ENCODE measurements at regions of chr4 and their contacts with region 1.

Region 1: DNA sequence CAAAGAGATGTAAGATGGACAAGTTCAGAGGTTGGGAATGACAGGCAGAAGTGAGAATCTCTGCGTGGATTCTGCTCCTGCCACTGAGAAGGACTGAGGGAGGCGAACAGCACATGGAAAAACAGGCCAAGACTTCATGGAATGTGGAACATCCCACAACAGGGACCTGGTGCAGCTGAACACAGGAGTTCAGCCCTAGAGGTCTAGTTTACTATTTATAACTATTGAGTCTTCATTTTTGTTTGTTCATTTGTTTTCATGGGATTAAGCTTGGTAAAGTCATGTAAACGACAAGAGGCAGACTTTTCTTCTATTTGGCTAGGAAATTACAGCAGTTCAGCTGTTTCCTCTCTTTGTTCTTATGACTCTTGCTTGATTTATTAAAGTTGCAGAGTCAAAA is 234.5 kb downstream of the MAML3 start:
- DNase-seq: no peak
- H3K4me3 ChIP-seq: no peak overlapping the region
- H3K27ac ChIP-seq: peak overlapping the region; percentile 23 to 83
- H3K4me1 ChIP-seq: peaks cover 34% of the 10 kb centered on the region
- H3K27me3 ChIP-seq: no peaks in the 10 kb centered on the region
- CTCF ChIP-seq: no peak
- EP300 ChIP-seq: no peak
- POLR2A ChIP-seq: no peak

Region 2: GRCh38 chr4:138816875-138817274 is 1102.6 kb before region 1 on chr4:
- intact Hi-C with region 1: no loop called
- DNase-seq: no peak
- H3K4me3 ChIP-seq: no peak overlapping the region
- H3K27ac ChIP-seq: no peak overlapping the region
- H3K4me1 ChIP-seq: no peaks in the 10 kb centered on the region
- H3K27me3 ChIP-seq: no peaks in the 10 kb centered on the region
- CTCF ChIP-seq: no peak
- EP300 ChIP-seq: no peak
- POLR2A ChIP-seq: no peak

Region 3: GRCh38 chr4:140049024-140049848 is 129.7 kb after region 1 on chr4:
- intact Hi-C with region 1: loop called in 1 of 4 experiments (anchors 10 kb)
- DNase-seq: peak; percentile 68 to 78 (median 68)
- H3K4me3 ChIP-seq: peak overlapping the region; percentile 17
- H3K27ac ChIP-seq: peak overlapping the region; percentile 62 to 85
- H3K4me1 ChIP-seq: peaks cover 5% of the 10 kb centered on the region
- H3K27me3 ChIP-seq: no peaks in the 10 kb centered on the region
- CTCF ChIP-seq: no peak
- EP300 ChIP-seq: no peak
- POLR2A ChIP-seq: no peak

Region 4: GRCh38 chr4:140982613-140983340 is 1063.3 kb after region 1 on chr4:
- intact Hi-C with region 1: no loop called
- DNase-seq: no peak
- H3K4me3 ChIP-seq: no peak overlapping the region
- H3K27ac ChIP-seq: no peak overlapping the region
- H3K4me1 ChIP-seq: peaks cover 1% of the 10 kb centered on the region
- H3K27me3 ChIP-seq: no peaks in the 10 kb centered on the region
- CTCF ChIP-seq: no peak
- EP300 ChIP-seq: no peak
- POLR2A ChIP-seq: no peak

Measured in ovary (tissue), 10 donors.